AG04449 (cell line): ENCODE measurements at regions of chr19 and their contacts with region 1.

Region 1: DNA sequence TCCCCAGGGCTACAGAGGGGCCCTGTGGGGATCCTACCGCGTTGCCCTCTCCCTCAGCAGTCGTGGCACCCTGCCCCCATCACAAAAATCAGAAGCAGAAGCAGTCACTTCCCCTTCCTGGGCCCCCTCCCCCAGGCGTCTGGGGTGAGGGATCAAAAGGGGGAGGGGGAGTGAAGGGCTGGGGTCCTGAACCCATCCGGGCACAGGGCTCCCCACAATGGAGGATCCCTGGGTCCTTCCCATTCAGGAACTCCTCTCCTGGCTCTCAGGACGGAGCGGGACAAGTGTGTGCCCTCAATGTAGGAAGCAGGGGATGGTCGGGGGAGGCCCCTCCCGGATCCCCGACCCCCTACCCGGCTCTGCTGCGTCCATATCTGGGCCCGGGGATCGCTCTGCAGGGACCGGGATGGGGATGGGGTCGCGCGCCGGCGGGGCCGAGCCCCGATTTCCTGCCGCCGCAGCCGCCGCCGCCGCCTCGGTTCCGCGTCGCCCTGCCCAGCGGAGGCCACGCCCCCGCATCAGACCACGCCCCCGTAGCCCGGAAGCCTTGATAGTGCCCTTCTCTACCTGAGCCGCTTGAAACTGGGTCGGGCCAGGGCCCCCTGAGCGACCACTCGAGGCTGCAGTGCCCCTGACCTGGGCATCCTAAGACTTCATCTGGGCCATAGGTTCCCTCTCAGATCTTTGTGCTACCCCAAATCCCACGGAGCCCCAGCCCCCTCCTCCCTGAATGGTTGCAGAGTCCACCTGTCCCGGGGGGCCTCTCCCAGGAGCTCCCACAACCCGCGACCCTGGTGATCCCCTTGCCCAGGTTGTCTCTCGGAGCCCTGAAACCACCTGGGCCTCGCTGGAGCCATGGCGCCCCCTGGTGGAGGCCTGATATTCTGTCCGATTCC is at the start of gene GMIP:
- DNase-seq: no peak
- H3K4me3 ChIP-seq: peak within 1 kb of the TSS; percentile 88
- CTCF ChIP-seq: peak; percentile 79

Region 2: DNA sequence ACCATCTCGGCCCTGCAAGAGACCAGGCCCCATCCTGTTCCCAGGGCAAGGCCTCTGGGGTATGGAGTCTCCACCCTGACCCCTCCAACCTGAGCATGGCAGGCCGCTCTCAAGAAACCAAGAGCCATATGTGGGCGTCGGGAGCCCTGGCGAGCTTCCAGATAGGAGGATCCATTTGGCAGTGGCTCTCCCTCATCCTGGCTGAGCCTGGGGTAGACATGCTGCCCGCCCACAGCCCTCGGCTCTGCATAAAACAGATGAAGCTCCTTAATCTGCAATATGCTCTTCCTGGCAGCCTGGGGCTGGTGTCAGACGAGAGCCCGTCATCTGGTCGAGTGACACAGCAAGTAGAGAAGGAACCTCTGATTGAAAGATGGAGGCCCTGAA is 14.0 kb after region 1 on chr19:
- CTCF ChIA-PET with region 1: interaction called, 41 read pairs
- POLR2A ChIA-PET with region 1: no interaction called
- DNase-seq: no peak
- H3K4me3 ChIP-seq: no peak overlapping the region
- CTCF ChIP-seq: no peak

Region 3: GRCh38 chr19:19663256-19664038 is 20.0 kb after region 1 on chr19 and contains the start of gene ATP13A1:
- CTCF ChIA-PET with region 1: interaction called, 41 read pairs
- POLR2A ChIA-PET with region 1: no interaction called
- DNase-seq: peak; percentile 78
- H3K4me3 ChIP-seq: peak within 1 kb of the TSS; percentile 99
- CTCF ChIP-seq: peak; percentile 17